ENCODE measurements at regions of chr2 and their contacts with region 1.

Region 1: DNA sequence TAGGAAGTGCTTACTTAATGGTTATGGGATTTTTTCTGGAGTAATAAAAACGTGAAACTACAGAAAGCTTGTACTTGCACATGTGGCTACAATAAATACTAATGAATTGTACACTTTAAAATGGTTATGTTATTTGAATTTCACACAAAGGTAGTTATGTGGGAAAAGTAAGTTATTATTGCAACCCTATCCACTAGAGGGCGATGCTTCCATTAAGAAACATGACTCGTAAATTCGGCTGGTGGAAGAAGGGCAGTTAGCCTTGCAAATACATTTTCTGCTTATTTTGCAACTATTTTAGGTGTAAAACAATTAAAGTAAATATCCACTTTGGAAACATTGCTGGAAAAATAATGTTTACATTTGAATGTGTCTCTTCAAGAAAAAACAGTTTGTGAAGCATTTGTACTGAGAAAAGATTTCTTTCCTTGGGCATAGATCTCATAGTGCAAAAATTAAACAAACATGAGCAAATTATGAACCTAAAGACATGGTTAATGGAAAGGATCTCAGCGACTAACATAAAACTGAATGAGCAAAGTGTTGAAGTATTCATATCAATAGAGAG is 68.1 kb upstream of the CSRNP3 start:
- DNase-seq: peak; percentile 73 to 89 (median 84)
- H3K4me3 ChIP-seq: no peak overlapping the region
- H3K27ac ChIP-seq: no peak overlapping the region
- H3K4me1 ChIP-seq: no peaks in the 10 kb centered on the region
- H3K27me3 ChIP-seq: no peaks in the 10 kb centered on the region

Region 2: DNA sequence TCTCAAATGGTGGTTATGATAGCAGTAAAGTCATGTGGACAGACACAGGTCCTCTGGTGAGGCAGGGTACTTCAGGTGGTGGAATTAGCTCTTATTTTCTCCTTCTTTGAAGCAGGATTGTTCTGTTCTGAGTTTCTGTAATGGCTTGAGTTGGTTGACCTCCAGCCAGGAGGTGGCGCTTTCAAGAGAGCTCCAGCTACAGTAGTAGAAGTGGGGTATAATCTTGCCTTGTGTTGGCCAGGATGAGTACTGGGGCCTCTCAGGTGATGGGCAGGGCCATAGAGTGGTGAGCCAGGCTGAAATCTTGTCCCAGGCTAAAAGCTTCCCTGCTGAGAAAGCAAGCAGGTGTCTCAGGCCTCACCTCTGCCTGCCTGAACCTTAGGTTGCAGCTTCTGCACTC is 15.6 kb after region 1 on chr2:
- CTCF ChIA-PET with region 1: interaction called, 14 read pairs
- POLR2A ChIA-PET with region 1: no interaction called
- DNase-seq: no peak
- H3K4me3 ChIP-seq: no peak overlapping the region
- H3K27ac ChIP-seq: no peak overlapping the region
- H3K4me1 ChIP-seq: no peaks in the 10 kb centered on the region
- H3K27me3 ChIP-seq: no peaks in the 10 kb centered on the region

Region 3: GRCh38 chr2:165563468-165564225 is 162.3 kb after region 1 on chr2:
- CTCF ChIA-PET with region 1: interaction called, 17 read pairs
- POLR2A ChIA-PET with region 1: no interaction called
- DNase-seq: peak; percentile 13 to 52 (median 49)
- H3K4me3 ChIP-seq: no peak overlapping the region
- H3K27ac ChIP-seq: no peak overlapping the region
- H3K4me1 ChIP-seq: no peaks in the 10 kb centered on the region
- H3K27me3 ChIP-seq: no peaks in the 10 kb centered on the region

Region 4: GRCh38 chr2:165698444-165698894 is 297.1 kb after region 1 on chr2:
- CTCF ChIA-PET with region 1: interaction called, 22 read pairs
- POLR2A ChIA-PET with region 1: no interaction called
- DNase-seq: peak; percentile 40 to 74 (median 73)
- H3K4me3 ChIP-seq: no peak overlapping the region
- H3K27ac ChIP-seq: no peak overlapping the region
- H3K4me1 ChIP-seq: no peaks in the 10 kb centered on the region
- H3K27me3 ChIP-seq: no peaks in the 10 kb centered on the region

Region 5: GRCh38 chr2:165874445-165875039 is 473.2 kb after region 1 on chr2:
- CTCF ChIA-PET with region 1: interaction called, 23 read pairs
- POLR2A ChIA-PET with region 1: no interaction called
- DNase-seq: peak; percentile 60 to 79 (median 78)
- H3K4me3 ChIP-seq: no peak overlapping the region
- H3K27ac ChIP-seq: no peak overlapping the region
- H3K4me1 ChIP-seq: peaks cover 0 to 17% (median 7%) of the 10 kb centered on the region in 4 experiments
- H3K27me3 ChIP-seq: no peaks in the 10 kb centered on the region

Measured in common myeloid progenitor, CD34-positive (primary cell).